HEK293 (cell line): ENCODE measurements at regions of chr17 and their contacts with region 1.

Region 1: DNA sequence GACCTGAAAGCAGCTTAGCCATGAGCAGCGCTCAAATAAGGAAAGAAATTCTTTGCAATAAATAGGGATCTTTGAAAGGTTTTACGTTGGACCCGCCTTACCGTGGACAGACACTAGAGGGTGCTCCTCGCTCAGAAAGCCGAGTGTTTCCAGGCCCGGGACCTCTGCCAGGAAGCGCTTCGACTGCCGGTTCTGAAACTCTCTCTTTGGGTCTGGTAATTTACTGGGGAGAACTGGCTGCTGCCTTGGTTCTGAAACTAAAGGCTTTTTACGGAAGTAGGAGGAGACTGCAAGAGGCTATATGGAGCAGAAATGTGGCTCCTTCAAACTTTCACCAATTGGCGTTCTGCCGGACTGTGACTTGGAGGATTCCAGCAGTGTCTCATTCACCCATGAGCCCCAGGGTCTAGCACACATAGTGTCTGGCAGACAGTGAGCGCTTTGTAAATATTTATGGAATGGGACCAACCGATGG is 45.6 kb upstream of the HOXB9 start:
- H3K4me3 ChIP-seq: peak overlapping the region; percentile 8
- H3K27ac ChIP-seq: no peak overlapping the region
- H3K4me1 ChIP-seq: no peaks in the 10 kb centered on the region
- CTCF ChIP-seq: peak; percentile 71

Region 2: GRCh38 chr17:48492401-48493298 is 179.1 kb before region 1 on chr17:
- CTCF ChIA-PET with region 1: no interaction called
- POLR2A ChIA-PET with region 1: no interaction called
- H3K4me3 ChIP-seq: peak overlapping the region; percentile 10; the same call in 1 of the 2 replicates
- H3K27ac ChIP-seq: peak overlapping the region; percentile 97
- H3K4me1 ChIP-seq: peaks cover 27% of the 10 kb centered on the region
- CTCF ChIP-seq: peak; percentile 93

Region 3: DNA sequence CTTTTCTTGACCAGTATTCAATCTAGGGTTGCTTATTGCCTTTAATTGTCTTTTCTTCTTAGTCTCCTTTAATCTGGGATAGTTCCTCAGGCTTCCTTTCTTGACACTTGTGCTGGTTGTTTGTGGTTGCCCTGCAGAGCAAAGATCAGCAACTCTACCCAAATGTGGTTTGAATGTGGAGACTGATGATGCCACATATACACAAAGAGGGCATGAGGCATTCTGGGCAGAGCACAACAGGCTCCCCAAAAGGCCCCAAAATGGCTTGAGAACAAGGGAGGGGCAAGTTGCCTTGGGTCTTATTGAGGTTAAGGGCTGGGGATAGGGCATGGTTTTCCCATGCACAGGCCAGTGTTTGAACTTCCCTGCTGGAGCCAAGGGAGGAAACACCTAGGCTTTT is 15.8 kb before region 1 on chr17:
- CTCF ChIA-PET with region 1: interaction called, 11 read pairs
- POLR2A ChIA-PET with region 1: no interaction called
- H3K4me3 ChIP-seq: no peak overlapping the region
- H3K27ac ChIP-seq: no peak overlapping the region
- H3K4me1 ChIP-seq: no peaks in the 10 kb centered on the region
- CTCF ChIP-seq: no peak